ENCODE measurements at regions of chr3 and their contacts with region 1.

Region 1: DNA sequence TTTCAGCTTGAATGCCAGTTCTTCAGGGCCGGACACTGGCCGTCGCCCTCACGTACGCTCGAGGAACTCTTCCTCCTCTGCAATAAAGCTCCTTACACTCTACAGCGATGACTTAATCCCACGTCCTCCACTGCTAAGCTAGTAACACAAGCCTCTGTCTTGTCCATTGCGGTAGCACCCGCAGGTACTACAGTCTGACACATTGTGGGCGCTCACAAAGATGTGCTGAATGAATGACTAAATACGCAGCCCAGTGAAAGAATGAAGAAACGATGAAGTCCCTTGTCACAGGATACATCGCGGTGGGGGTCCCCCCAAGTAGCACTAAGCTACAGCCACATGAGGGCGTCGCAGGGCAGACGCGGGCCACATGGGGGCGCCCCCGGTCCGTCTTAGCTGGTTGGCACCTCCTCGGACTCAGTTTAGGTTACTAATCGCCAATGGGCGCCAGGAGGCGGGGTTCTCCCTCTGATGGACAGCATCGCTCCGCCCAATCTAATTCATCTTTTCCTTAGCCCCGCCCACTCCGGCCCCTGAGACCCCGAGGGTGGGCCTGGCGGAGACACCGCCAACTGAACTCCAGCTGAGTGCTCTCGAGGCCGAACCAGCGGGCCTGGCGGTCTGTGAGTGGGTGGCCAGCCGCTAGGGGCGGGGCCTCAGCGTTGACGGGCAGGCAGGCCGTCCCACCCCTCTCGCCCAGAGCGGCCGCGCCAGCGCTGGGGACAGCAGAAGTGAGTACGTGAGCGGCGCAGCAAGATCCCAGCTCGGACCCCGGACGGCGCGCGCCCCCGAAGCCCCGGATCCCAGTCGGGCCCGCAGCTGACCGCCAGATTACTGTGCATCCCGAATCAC is at the start of gene EPHB3:
- DNase-seq: peak; percentile 97
- ATAC-seq: peak; percentile 91
- H3K4me3 Mint-ChIP-seq: peak within 1 kb of the TSS; percentile 57
- H3K27ac Mint-ChIP-seq: peak within 1 kb of the TSS; percentile 74
- H3K4me1 Mint-ChIP-seq: peaks cover 30% of the 10 kb centered on the region
- H3K27me3 Mint-ChIP-seq: peaks cover 28% of the 10 kb centered on the region
- total RNA-seq, gene EPHB3: not detected

Region 2: DNA sequence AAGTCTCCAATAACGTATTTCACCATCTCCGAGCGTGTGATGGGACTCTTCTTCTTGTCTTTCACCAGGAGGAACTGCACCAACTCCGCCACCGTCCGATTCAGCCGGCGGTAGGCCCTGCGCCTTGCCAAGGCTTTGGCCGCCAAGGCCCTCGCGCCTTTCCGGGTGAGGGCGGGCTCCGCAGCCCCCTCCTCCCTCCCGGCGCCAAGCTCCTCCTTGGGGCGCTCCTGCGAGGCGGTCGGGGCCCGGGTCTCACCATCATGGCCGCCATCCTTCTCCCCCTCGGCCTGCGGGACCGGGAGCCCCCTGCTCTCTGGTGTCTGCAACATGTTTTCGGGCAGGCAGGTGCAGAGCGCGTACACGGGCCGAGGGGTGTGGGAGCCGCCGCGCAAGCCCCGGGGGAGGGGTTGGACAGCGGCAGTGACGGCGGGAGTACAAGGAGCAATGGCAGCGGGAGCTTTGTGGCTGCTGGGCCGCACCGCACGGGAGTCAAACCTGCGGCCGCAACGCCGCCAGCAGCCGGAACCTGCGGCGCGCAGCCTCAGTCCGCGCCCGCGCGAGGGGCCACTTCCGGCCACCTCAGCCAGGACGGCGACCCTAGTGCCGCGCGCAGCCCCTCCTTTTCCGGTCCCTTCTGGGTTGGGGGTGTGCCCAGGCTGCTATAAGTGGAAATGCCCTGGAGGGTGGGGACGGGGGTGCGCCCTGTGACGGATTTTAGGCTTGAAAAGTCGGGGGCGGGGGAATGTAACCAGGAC is 150.4 kb after region 1 on chr3 and contains the start of gene MAGEF1:
- CTCF ChIA-PET with region 1: interaction called, 4 read pairs
- POLR2A ChIA-PET with region 1: interaction called, 3 read pairs
- intact Hi-C with region 1: loop called in 1 of 2 experiments (anchors 1 kb)
- DNase-seq: peak; percentile 85
- ATAC-seq: peak; percentile 87
- H3K4me3 Mint-ChIP-seq: peak within 1 kb of the TSS; percentile 80
- H3K27ac Mint-ChIP-seq: peak within 1 kb of the TSS; percentile 97
- H3K4me1 Mint-ChIP-seq: peaks cover 32% of the 10 kb centered on the region
- H3K27me3 Mint-ChIP-seq: peaks cover 2% of the 10 kb centered on the region
- total RNA-seq, gene MAGEF1: 13.6 to 14.3 TPM

Region 3: DNA sequence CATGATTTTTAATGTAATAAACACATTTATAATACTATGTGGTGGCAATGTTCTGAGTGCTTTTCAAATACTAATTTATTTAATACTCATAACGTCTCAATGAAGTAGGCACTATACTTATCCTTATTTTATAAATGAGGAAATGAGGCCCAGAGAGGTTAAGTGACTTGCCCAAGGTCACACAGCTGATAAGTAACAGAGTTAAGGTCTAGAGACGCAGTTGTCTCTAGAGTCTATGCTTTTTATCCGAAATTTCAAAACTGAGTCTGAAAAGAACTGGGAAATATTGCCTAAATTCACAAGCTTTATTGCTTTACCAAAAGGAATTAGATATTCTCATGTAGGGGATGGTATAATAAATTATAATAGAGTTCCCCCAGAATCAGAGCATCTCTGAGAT is 182.0 kb after region 1 on chr3:
- CTCF ChIA-PET with region 1: interaction called, 11 read pairs
- POLR2A ChIA-PET with region 1: no interaction called
- intact Hi-C with region 1: loop called in 1 of 2 experiments (anchors 1 kb)
- DNase-seq: no peak
- ATAC-seq: no peak
- H3K4me3 Mint-ChIP-seq: no peak overlapping the region
- H3K27ac Mint-ChIP-seq: no peak overlapping the region
- H3K4me1 Mint-ChIP-seq: peaks cover 10% of the 10 kb centered on the region
- H3K27me3 Mint-ChIP-seq: peaks cover 5% of the 10 kb centered on the region

Region 4: DNA sequence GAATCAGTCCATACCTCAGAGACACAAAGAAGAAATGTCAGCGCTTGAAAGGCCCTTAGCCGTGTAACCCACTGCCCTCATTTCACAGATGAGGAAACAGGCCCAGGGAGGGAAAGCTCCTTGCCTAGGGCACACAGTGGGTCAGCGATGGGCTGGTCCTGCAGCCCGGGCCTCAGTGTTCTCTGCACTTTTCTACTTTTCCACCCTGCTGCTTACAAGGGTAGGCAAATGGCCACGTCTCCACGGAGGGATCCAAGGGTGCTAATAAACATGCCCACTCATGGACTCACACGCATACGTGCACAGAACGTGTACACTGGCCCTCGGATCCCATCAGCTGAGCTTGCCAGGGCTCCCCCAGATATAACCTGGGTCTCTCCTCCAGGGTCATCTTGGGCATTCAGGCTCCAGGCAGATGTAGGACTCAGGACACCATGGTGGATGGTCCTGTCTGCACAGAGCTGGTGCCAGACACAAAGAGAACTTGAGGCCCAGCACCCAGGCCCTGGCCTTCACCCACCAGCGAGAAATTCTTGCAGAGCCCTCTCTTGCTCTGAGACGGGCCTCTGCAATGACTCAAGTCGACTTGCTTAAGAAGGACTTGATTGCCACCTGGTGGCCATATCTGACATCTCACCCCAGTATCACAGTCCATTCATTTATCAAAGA is 216.2 kb after region 1 on chr3:
- CTCF ChIA-PET with region 1: interaction called, 7 read pairs
- POLR2A ChIA-PET with region 1: interaction called, 5 read pairs
- intact Hi-C with region 1: loop called (anchors 1 kb)
- DNase-seq: peak; percentile 91
- ATAC-seq: peak; percentile 99
- H3K4me3 Mint-ChIP-seq: no peak overlapping the region
- H3K27ac Mint-ChIP-seq: no peak overlapping the region
- H3K4me1 Mint-ChIP-seq: no peaks in the 10 kb centered on the region
- H3K27me3 Mint-ChIP-seq: peaks cover 10% of the 10 kb centered on the region